ENCODE measurements at regions of chr17 and their contacts with region 1.

Region 1: GRCh38 chr17:1186923-1187771 is 7.4 kb upstream of the ABR start:
- DNase-seq: peak; percentile 73
- ATAC-seq: peak; percentile 79
- H3K4me3 Mint-ChIP-seq: peak overlapping the region; percentile 26
- H3K27ac Mint-ChIP-seq: no peak overlapping the region
- H3K4me1 Mint-ChIP-seq: peaks cover 60% of the 10 kb centered on the region
- H3K27me3 Mint-ChIP-seq: no peaks in the 10 kb centered on the region
- CTCF ChIP-seq: no peak

Region 2: DNA sequence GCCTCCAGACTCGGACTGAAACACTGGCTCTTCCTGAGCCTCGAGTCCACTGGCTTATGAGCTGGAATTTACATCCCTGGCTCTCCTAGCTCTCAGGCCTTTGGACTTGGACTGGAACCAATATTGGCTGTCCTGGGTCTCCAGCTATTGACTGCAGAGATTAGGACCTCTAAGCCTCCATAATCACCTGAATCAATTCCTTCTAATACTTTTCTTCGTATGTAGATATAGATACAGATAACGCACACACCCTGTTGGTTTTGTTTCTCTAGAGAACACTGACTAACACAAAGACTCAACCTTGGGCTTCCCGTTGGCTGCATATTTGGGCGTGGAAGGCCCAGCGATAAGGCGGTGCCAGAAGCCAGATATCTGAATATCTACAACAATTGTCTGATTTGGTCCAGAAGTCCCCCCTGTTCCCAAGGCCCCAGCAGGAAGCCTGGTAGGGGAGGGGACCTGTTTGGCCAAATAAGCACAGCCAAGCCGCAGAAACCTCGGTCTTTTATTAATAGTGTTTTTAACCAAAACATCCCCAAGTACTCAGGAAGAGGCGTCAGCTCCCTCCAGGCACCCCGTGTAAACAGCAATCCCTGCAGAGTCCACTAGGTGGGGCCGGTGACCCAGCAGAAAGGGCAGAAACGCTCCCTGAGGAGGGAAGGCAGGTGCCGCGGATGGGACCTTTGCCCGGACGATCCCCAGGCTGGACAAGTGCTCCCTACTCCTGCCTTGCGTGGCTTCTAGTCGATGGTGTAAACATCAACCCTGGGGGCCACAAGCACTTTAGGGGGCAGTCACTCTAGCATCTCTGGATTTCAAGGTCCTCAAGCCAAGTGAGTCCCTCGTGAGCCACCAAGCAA is 64.4 kb before region 1 on chr17:
- CTCF ChIA-PET with region 1: interaction called, 76 read pairs
- POLR2A ChIA-PET with region 1: interaction called, 3 read pairs
- intact Hi-C with region 1: loop called (anchors 2 kb)
- DNase-seq: peak; percentile 74
- ATAC-seq: peak; percentile 97
- H3K4me3 Mint-ChIP-seq: no peak overlapping the region
- H3K27ac Mint-ChIP-seq: no peak overlapping the region
- H3K4me1 Mint-ChIP-seq: peaks cover 13% of the 10 kb centered on the region
- H3K27me3 Mint-ChIP-seq: no peaks in the 10 kb centered on the region
- CTCF ChIP-seq: no peak

Region 3: DNA sequence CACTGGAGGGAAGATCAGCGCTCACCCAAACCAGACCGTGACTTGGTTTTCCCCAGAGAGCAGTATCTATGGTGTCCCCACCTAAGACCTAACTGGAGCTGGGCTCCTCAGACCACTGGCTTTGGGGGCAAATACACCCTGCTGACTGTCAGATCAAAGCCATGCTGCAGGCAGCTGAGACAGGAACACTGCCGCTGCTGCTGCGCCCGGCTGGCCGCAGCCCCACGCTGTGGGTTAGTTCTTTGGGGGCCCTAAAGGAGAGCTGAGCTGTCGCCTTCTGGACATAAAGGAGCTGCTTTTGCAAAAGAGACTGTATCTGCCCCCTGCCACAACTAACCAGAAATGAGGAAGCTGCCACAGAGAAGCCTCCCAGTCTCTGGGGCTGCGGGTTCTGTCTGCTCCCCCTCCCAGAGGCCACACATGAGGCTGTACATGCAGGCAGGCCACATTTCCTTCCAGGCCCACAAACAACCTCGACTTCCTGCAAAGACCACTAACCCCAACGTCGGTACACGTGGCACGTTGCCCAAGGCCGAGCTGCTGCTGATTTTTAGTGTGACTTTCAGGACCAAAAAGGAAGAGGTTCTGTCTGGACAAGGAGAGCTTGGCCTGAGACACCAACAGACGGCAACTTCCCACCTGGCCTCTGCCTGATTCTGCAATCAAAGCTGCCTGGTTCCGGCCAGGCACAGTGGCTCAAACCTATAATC is 10.8 kb after region 1 on chr17:
- CTCF ChIA-PET with region 1: interaction called, 32 read pairs
- POLR2A ChIA-PET with region 1: interaction called, 35 read pairs
- intact Hi-C with region 1: no loop called
- DNase-seq: peak; percentile 58
- ATAC-seq: peak; percentile 87
- H3K4me3 Mint-ChIP-seq: peak overlapping the region; percentile 63
- H3K27ac Mint-ChIP-seq: peak overlapping the region; percentile 80
- H3K4me1 Mint-ChIP-seq: peaks cover 69% of the 10 kb centered on the region
- H3K27me3 Mint-ChIP-seq: no peaks in the 10 kb centered on the region
- CTCF ChIP-seq: no peak

Region 4: GRCh38 chr17:1244606-1245012 is 57.5 kb after region 1 on chr17:
- CTCF ChIA-PET with region 1: no interaction called
- POLR2A ChIA-PET with region 1: no interaction called
- intact Hi-C with region 1: no loop called
- DNase-seq: no peak
- ATAC-seq: no peak
- H3K4me3 Mint-ChIP-seq: no peak overlapping the region
- H3K27ac Mint-ChIP-seq: no peak overlapping the region
- H3K4me1 Mint-ChIP-seq: no peaks in the 10 kb centered on the region
- H3K27me3 Mint-ChIP-seq: peaks cover 11% of the 10 kb centered on the region
- CTCF ChIP-seq: no peak

Region 5: DNA sequence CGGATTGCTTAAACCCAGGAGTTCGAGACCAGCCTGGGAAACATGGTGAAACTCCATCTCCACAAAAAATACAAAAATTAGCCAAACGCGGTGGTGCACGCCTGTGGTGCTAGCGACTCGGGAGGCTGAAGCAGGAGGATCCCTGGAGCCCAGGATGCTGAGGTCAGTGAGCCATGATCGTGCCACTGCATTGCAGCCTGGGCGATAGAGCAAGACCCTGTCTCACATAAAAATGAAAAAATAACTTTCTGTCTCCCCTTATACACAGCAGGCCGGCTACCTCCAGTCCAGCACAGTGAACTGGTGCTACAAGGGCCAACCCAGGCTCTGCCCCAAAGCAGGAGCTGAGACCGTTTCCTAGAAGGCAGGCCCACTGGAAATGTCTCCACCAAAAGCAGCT is 153.2 kb after region 1 on chr17:
- CTCF ChIA-PET with region 1: no interaction called
- POLR2A ChIA-PET with region 1: no interaction called
- intact Hi-C with region 1: no loop called
- DNase-seq: no peak
- ATAC-seq: no peak
- H3K4me3 Mint-ChIP-seq: no peak overlapping the region
- H3K27ac Mint-ChIP-seq: peak overlapping the region; percentile 10
- H3K4me1 Mint-ChIP-seq: peaks cover 14% of the 10 kb centered on the region
- H3K27me3 Mint-ChIP-seq: no peaks in the 10 kb centered on the region
- CTCF ChIP-seq: no peak

Region 6: GRCh38 chr17:1362964-1363363 is 175.8 kb after region 1 on chr17:
- CTCF ChIA-PET with region 1: no interaction called
- POLR2A ChIA-PET with region 1: no interaction called
- intact Hi-C with region 1: no loop called
- DNase-seq: no peak
- ATAC-seq: peak; percentile 66
- H3K4me3 Mint-ChIP-seq: peak overlapping the region; percentile 70
- H3K27ac Mint-ChIP-seq: peak overlapping the region; percentile 78
- H3K4me1 Mint-ChIP-seq: peaks cover 61% of the 10 kb centered on the region
- H3K27me3 Mint-ChIP-seq: no peaks in the 10 kb centered on the region
- CTCF ChIP-seq: no peak

Measured in activated B cell treated with CpG ODN at 0.5 μM for 24 hours (primary cell).